ENCODE measurements at regions of chr7 and their contacts with region 1.

Region 1: GRCh38 chr7:83162402-83163256 is at the start of gene PCLO:
- DNase-seq: peak; percentile 78 to 93
- H3K4me3 ChIP-seq: peak within 1 kb of the TSS; percentile 74 to 87 (median 84)
- H3K27ac ChIP-seq: peak within 1 kb of the TSS; percentile 86
- H3K4me1 ChIP-seq: peaks cover 0 to 3% (median 0%) of the 10 kb centered on the region in 4 experiments; a peak in 3 of 7 replicates
- H3K27me3 ChIP-seq: no peaks in the 10 kb centered on the region
- CTCF ChIP-seq: no peak
- EP300 ChIP-seq: peak in 1 of 2 experiments; percentile 69; a peak in 1 of 3 replicates
- POLR2A ChIP-seq: peak; percentile 89 to 90
- RAD21 ChIP-seq: no peak; a peak in 1 of 4 replicates
- total RNA-seq, gene PCLO: 3.2 and 3.7 TPM in 2 replicates

Region 2: DNA sequence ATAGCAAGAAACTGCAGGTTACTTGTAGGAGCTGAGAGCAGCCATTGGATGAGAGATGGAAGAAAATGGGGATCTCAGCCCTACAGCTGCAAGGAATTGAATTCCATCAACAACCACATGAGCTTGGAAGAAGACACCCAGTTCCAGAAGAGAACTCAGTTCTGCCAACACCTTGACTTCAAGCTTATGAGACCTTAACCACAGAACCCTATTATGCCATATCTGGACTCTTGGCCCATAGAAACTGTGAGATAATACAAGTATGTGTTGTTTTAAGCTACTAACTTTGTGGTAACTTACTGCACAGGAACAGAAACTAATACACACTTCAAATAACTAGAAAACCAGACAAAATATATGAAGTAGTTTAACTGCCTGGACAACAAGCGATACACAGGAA is 506.7 kb before region 1 on chr7:
- CTCF ChIA-PET with region 1: no interaction called
- POLR2A ChIA-PET with region 1: no interaction called
- DNase-seq: no peak
- H3K4me3 ChIP-seq: no peak overlapping the region
- H3K27ac ChIP-seq: no peak overlapping the region
- H3K4me1 ChIP-seq: no peaks in the 10 kb centered on the region
- H3K27me3 ChIP-seq: peaks cover 0 to 1% (median 0%) of the 10 kb centered on the region in 4 experiments; a peak in 2 of 7 replicates
- CTCF ChIP-seq: no peak
- EP300 ChIP-seq: no peak
- POLR2A ChIP-seq: no peak
- RAD21 ChIP-seq: no peak

Region 3: GRCh38 chr7:83150310-83150709 is 12.3 kb before region 1 on chr7:
- CTCF ChIA-PET with region 1: no interaction called
- POLR2A ChIA-PET with region 1: interaction called, 16 read pairs
- DNase-seq: no peak
- H3K4me3 ChIP-seq: no peak overlapping the region
- H3K27ac ChIP-seq: no peak overlapping the region
- H3K4me1 ChIP-seq: peaks cover 0 to 2% (median 0%) of the 10 kb centered on the region in 4 experiments; a peak in 2 of 7 replicates
- H3K27me3 ChIP-seq: no peaks in the 10 kb centered on the region
- CTCF ChIP-seq: no peak
- EP300 ChIP-seq: no peak
- POLR2A ChIP-seq: no peak
- RAD21 ChIP-seq: no peak